Heart left ventricle (tissue), 16 donors: ENCODE measurements at regions of chr12 and their contacts with region 1.

Region 1: DNA sequence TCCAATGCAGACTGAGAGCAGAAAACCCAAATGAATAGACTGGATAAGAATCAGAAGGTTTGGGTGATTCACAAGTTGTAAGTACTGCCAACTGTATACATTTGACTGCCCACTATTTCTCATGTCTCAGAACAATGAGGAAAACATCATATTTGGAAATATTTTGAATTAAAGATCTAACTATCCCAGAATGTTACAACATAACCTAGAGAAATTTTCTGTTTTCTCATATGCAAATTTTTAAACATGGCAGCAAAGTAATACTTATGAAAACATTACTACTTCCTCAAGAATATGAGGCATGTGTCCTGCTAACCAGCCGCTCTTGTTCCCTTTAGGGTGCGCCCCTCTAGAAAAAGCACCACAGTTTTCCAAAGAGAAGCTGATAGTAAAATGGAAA is 179.9 kb downstream of the PTPRO start:
- DNase-seq: no peak
- ATAC-seq: no peak
- H3K4me3 ChIP-seq: no peak overlapping the region
- H3K27ac ChIP-seq: no peak overlapping the region
- H3K4me1 ChIP-seq: no peaks in the 10 kb centered on the region
- H3K27me3 ChIP-seq: peaks cover 0 to 26% (median 0%) of the 10 kb centered on the region in 9 donors
- CTCF ChIP-seq: no peak
- POLR2A ChIP-seq: no peak

Region 2: DNA sequence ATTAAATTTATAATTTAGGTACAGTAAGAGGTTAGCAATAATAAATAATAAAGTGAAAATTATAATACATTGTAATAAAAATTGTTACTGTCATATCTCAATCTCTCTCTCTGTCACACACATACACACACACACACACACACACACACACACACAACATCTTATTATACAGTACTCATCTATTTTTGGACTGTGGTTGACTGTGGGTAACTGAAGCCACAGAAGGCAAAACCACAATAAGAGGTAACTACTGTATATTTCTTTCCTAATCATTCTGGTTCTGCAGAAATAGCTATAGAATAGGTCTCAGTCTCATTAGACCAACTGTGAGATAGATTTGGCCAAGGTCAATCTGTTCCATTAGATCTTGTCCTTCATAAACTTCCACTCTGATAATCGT is 213.0 kb before region 1 on chr12:
- intact Hi-C with region 1: loop called in 1 of 10 experiments (anchors 5 kb)
- DNase-seq: no peak
- ATAC-seq: no peak
- H3K4me3 ChIP-seq: no peak overlapping the region
- H3K27ac ChIP-seq: no peak overlapping the region
- H3K4me1 ChIP-seq: no peaks in the 10 kb centered on the region
- H3K27me3 ChIP-seq: peaks cover 0 to 2% (median 0%) of the 10 kb centered on the region in 9 donors
- CTCF ChIP-seq: no peak
- POLR2A ChIP-seq: no peak